SK-N-SH (cell line): ENCODE measurements at regions of chr15 and their contacts with region 1.

Region 1: GRCh38 chr15:57118013-57118799 is 199.8 kb downstream of the TCF12 start:
- DNase-seq: no peak
- H3K4me3 ChIP-seq: no peak overlapping the region
- H3K27ac ChIP-seq: peak overlapping the region; percentile 24 to 42; a peak in 3 of 4 replicates
- H3K4me1 ChIP-seq: peaks cover 9 to 28% of the 10 kb centered on the region in 2 experiments; a peak in 3 of 4 replicates
- H3K27me3 ChIP-seq: no peaks in the 10 kb centered on the region
- CTCF ChIP-seq: no peak
- EP300 ChIP-seq: no peak
- RAD21 ChIP-seq: no peak

Region 2: GRCh38 chr15:57138349-57138788 is 20.2 kb after region 1 on chr15:
- CTCF ChIA-PET with region 1: interaction called, 25 read pairs
- POLR2A ChIA-PET with region 1: no interaction called
- DNase-seq: peak; percentile 56
- H3K4me3 ChIP-seq: no peak overlapping the region; a peak in 1 of 4 replicates
- H3K27ac ChIP-seq: no peak overlapping the region
- H3K4me1 ChIP-seq: peaks cover 20 to 29% of the 10 kb centered on the region in 2 experiments; a peak in 3 of 4 replicates
- H3K27me3 ChIP-seq: no peaks in the 10 kb centered on the region
- CTCF ChIP-seq: peak; percentile 86
- EP300 ChIP-seq: no peak
- RAD21 ChIP-seq: peak; percentile 71